H1 (cell line): ENCODE measurements at regions of chr7 and their contacts with region 1.

Region 1: GRCh38 chr7:101018271-101019167 is 1.4 kb upstream of the MUC17 start:
- DNase-seq: peak in 1 of 2 experiments; percentile 82
- H3K4me3 ChIP-seq: peak overlapping the region in 3 of 4 experiments; percentile 14 to 46 (median 19); a peak in 4 of 8 replicates
- H3K27ac ChIP-seq: peak overlapping the region; percentile 43; the same call in 1 of the 2 replicates
- H3K4me1 ChIP-seq: peaks cover 13 to 27% (median 19%) of the 10 kb centered on the region in 4 experiments
- H3K27me3 ChIP-seq: no peaks in the 10 kb centered on the region; a peak in 1 of 7 replicates
- CTCF ChIP-seq: no peak
- EP300 ChIP-seq: no peak
- POLR2A ChIP-seq: no peak
- RAD21 ChIP-seq: no peak

Region 2: GRCh38 chr7:100965723-100966541 is 52.6 kb before region 1 on chr7:
- CTCF ChIA-PET with region 1: interaction called, 10 read pairs
- POLR2A ChIA-PET with region 1: interaction called, 3 read pairs
- DNase-seq: peak; percentile 97 to 100
- H3K4me3 ChIP-seq: peak overlapping the region; percentile 36 to 79 (median 60)
- H3K27ac ChIP-seq: no peak overlapping the region
- H3K4me1 ChIP-seq: peaks cover 4 to 32% (median 26%) of the 10 kb centered on the region in 4 experiments
- H3K27me3 ChIP-seq: peaks cover 3 to 18% (median 14%) of the 10 kb centered on the region in 4 experiments
- CTCF ChIP-seq: peak in 2 of 3 experiments; percentile 96 to 98; a peak in 3 of 4 replicates
- EP300 ChIP-seq: peak in 1 of 2 experiments; percentile 69; a peak in 1 of 3 replicates
- POLR2A ChIP-seq: no peak
- RAD21 ChIP-seq: peak; percentile 79 to 92

Region 3: GRCh38 chr7:101031082-101031481 is 12.6 kb after region 1 on chr7:
- CTCF ChIA-PET with region 1: interaction called, 16 read pairs
- POLR2A ChIA-PET with region 1: interaction called, 4 read pairs
- DNase-seq: peak in 1 of 2 experiments; percentile 59
- H3K4me3 ChIP-seq: no peak overlapping the region
- H3K27ac ChIP-seq: no peak overlapping the region
- H3K4me1 ChIP-seq: no peaks in the 10 kb centered on the region
- H3K27me3 ChIP-seq: no peaks in the 10 kb centered on the region; a peak in 3 of 7 replicates
- CTCF ChIP-seq: peak; percentile 72 to 80 (median 75)
- EP300 ChIP-seq: no peak
- POLR2A ChIP-seq: no peak
- RAD21 ChIP-seq: peak; percentile 84 to 87